Transverse colon (tissue), 4 donors: ENCODE measurements at regions of chr21 and their contacts with region 1.

Region 1: GRCh38 chr21:31866077-31866511 is 6.7 kb upstream of the HUNK start:
- DNase-seq: peak; percentile 89
- H3K4me3 ChIP-seq: no peak overlapping the region
- H3K27ac ChIP-seq: no peak overlapping the region
- H3K4me1 ChIP-seq: no peaks in the 10 kb centered on the region
- H3K27me3 ChIP-seq: no peaks in the 10 kb centered on the region
- CTCF ChIP-seq: peak; percentile 82 to 92 (median 90)
- EP300 ChIP-seq: no peak
- POLR2A ChIP-seq: no peak

Region 2: DNA sequence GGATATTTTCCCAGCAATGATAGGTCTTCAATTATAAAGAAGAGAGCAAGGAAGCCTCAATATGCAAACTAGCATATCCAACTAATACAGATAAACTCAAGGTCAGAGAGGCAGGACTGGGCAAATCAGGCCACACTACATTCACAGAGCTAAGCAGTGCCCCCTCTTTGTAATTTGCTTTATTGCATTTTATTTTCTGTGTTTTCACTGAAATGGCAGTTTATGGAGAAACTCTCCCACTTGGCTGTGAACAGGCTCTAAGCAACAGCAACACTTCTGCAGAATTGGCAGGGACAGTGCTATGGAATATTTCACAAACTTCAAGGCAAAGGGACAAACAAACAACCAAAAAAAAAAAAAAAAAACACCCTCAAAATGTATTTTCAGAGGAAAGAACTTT is 300.0 kb before region 1 on chr21:
- in situ Hi-C with region 1: no loop called
- intact Hi-C with region 1: no loop called
- DNase-seq: no peak
- H3K4me3 ChIP-seq: no peak overlapping the region
- H3K27ac ChIP-seq: no peak overlapping the region
- H3K4me1 ChIP-seq: no peaks in the 10 kb centered on the region
- H3K27me3 ChIP-seq: no peaks in the 10 kb centered on the region
- CTCF ChIP-seq: no peak
- EP300 ChIP-seq: no peak
- POLR2A ChIP-seq: no peak

Region 3: DNA sequence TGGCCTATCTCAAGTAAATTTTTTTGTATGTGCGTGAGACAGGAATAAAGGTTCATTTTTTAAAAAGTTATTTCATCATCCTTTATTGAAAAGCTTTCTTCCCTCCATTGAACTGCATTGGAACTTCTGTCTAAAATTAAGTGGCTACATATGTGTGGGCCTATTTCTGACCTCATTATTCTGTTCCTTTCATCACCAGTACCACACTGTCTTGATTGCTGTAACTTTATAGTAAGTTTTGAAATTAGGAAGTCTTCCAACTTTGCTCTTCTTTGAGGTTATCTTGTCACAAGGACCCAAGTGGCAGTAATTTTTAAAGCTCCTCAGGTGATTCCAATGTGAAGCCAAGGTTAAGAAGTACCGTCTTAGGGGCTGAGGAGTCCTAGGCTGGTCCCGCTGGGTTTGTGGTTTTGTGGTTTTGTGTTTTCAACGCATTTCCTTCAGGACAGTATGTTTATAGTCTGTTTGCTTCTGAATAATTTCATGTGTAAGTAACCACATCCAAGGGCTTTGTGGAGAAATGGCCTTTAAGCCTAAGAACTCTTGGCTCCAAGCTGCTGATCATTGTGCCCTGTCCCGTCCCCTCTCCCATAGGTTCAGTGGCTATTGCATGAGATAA is 121.8 kb before region 1 on chr21:
- in situ Hi-C with region 1: no loop called
- intact Hi-C with region 1: no loop called
- DNase-seq: no peak
- H3K4me3 ChIP-seq: no peak overlapping the region
- H3K27ac ChIP-seq: no peak overlapping the region
- H3K4me1 ChIP-seq: no peaks in the 10 kb centered on the region
- H3K27me3 ChIP-seq: no peaks in the 10 kb centered on the region
- CTCF ChIP-seq: no peak
- EP300 ChIP-seq: no peak
- POLR2A ChIP-seq: no peak

Region 4: DNA sequence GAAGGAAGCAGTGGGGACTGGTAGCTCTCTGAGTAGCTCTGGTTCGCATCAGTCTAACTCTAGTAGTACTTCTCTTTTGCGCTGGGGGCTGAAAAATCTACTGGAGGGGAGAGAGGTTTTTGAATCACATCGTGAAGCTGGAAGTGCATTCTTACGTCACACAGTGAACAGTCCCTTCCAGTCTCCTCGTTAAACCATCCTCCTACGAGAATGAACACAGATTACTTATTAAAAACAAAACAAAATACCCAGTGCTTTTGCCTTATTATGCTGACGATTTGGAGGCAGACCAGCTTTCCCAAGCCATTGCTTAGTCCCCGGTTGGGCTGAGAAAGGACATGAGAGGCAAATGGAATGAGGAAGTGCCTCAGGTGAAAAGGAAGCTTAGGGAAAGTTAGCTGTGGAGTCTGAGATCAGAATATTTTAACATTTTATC is 22.9 kb after region 1 on chr21:
- in situ Hi-C with region 1: no loop called
- intact Hi-C with region 1: no loop called
- DNase-seq: no peak
- H3K4me3 ChIP-seq: peak overlapping the region in 1 of 4 donors; percentile 6
- H3K27ac ChIP-seq: peak overlapping the region in 3 of 4 donors; percentile 25 to 52 (median 44)
- H3K4me1 ChIP-seq: peaks cover 0 to 9% (median 0%) of the 10 kb centered on the region in 4 donors
- H3K27me3 ChIP-seq: no peaks in the 10 kb centered on the region
- CTCF ChIP-seq: no peak
- EP300 ChIP-seq: no peak
- POLR2A ChIP-seq: no peak

Region 5: GRCh38 chr21:32021319-32021994 is 155.4 kb after region 1 on chr21:
- in situ Hi-C with region 1: loop called in 1 of 4 experiments (anchors 25 kb)
- intact Hi-C with region 1: no loop called
- DNase-seq: peak; percentile 54
- H3K4me3 ChIP-seq: no peak overlapping the region
- H3K27ac ChIP-seq: no peak overlapping the region
- H3K4me1 ChIP-seq: peaks cover 0 to 5% (median 0%) of the 10 kb centered on the region in 4 donors
- H3K27me3 ChIP-seq: no peaks in the 10 kb centered on the region
- CTCF ChIP-seq: no peak
- EP300 ChIP-seq: no peak
- POLR2A ChIP-seq: no peak

Region 6: GRCh38 chr21:32257962-32258785 is 392.1 kb after region 1 on chr21:
- in situ Hi-C with region 1: loop called (anchors 5 to 25 kb)
- intact Hi-C with region 1: loop called (anchors 2 kb)
- DNase-seq: peak; percentile 69
- H3K4me3 ChIP-seq: no peak overlapping the region
- H3K27ac ChIP-seq: no peak overlapping the region
- H3K4me1 ChIP-seq: peaks cover 0 to 22% (median 0%) of the 10 kb centered on the region in 4 donors
- H3K27me3 ChIP-seq: no peaks in the 10 kb centered on the region
- CTCF ChIP-seq: peak; percentile 65 to 83 (median 70)
- EP300 ChIP-seq: no peak
- POLR2A ChIP-seq: no peak

Region 7: GRCh38 chr21:32794644-32795079 is 928.6 kb after region 1 on chr21:
- in situ Hi-C with region 1: no loop called
- intact Hi-C with region 1: no loop called
- DNase-seq: no peak
- H3K4me3 ChIP-seq: no peak overlapping the region
- H3K27ac ChIP-seq: no peak overlapping the region
- H3K4me1 ChIP-seq: no peaks in the 10 kb centered on the region
- H3K27me3 ChIP-seq: no peaks in the 10 kb centered on the region
- CTCF ChIP-seq: no peak
- EP300 ChIP-seq: no peak
- POLR2A ChIP-seq: no peak